Activated B cell treated with CpG ODN at 0.5 μM for 24 hours (primary cell): ENCODE measurements at regions of chr2 and their contacts with region 1.

Region 1: DNA sequence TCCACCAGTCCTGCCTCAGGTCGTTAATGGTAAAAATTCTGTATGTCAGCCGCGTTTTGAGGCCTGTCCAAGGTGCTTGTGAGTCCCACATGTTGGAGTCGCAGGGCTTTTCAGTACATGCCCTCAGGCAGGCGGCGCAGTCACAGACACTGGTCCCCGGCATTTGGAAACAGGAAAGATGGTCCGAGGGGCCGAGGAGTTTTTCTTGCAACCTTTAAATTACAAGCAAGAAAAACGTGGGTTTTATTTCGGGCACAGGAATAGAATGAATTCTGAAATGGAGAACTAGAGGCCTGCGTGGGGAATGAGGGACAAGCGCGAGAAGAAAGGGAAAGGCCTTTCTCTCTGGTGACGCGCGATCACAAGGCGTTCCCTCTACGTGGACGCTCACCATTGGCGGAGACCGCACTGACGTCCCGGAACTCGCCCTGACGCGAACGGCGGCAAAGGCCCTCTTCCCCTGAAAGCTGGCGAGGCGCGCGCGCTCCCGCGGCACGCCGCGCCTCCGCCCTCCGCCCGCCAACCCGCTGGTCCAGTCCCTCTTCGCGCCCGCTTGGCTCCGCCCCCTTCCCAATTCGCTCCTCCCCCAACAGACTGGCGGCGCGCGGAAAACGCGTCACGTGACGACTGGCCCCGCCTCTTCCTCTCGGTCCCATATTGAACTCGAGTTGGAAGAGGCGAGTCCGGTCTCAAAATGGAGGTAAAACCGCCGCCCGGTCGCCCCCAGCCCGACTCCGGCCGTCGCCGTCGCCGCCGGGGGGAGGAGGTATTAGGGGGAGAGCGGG is at the start of gene HNRNPA3:
- DNase-seq: peak; percentile 100
- ATAC-seq: peak; percentile 86
- H3K4me3 Mint-ChIP-seq: peak within 1 kb of the TSS; percentile 95
- H3K27ac Mint-ChIP-seq: peak within 1 kb of the TSS; percentile 100
- H3K4me1 Mint-ChIP-seq: peaks cover 48% of the 10 kb centered on the region
- H3K27me3 Mint-ChIP-seq: no peaks in the 10 kb centered on the region
- CTCF ChIP-seq: no peak
- total RNA-seq, gene HNRNPA3: 254 and 275 TPM in 2 replicates

Region 2: GRCh38 chr2:177148477-177149154 is 63.7 kb before region 1 on chr2:
- CTCF ChIA-PET with region 1: no interaction called
- POLR2A ChIA-PET with region 1: no interaction called
- intact Hi-C with region 1: no loop called
- DNase-seq: peak; percentile 46
- ATAC-seq: peak; percentile 84
- H3K4me3 Mint-ChIP-seq: peak overlapping the region; percentile 89
- H3K27ac Mint-ChIP-seq: peak overlapping the region; percentile 36
- H3K4me1 Mint-ChIP-seq: peaks cover 15% of the 10 kb centered on the region
- H3K27me3 Mint-ChIP-seq: peaks cover 14% of the 10 kb centered on the region
- CTCF ChIP-seq: peak; percentile 36

Region 3: GRCh38 chr2:177169810-177170514 is 42.3 kb before region 1 on chr2:
- CTCF ChIA-PET with region 1: interaction called, 25 read pairs
- POLR2A ChIA-PET with region 1: interaction called, 89 read pairs
- intact Hi-C with region 1: loop called (anchors 1 kb)
- DNase-seq: no peak
- ATAC-seq: no peak
- H3K4me3 Mint-ChIP-seq: no peak overlapping the region
- H3K27ac Mint-ChIP-seq: peak overlapping the region; percentile 46
- H3K4me1 Mint-ChIP-seq: peaks cover 13% of the 10 kb centered on the region
- H3K27me3 Mint-ChIP-seq: no peaks in the 10 kb centered on the region
- CTCF ChIP-seq: no peak

Region 4: GRCh38 chr2:177229448-177230242 is 17.3 kb after region 1 on chr2:
- CTCF ChIA-PET with region 1: no interaction called
- POLR2A ChIA-PET with region 1: interaction called, 5 read pairs
- intact Hi-C with region 1: loop called (anchors 1 kb)
- DNase-seq: no peak
- ATAC-seq: no peak
- H3K4me3 Mint-ChIP-seq: no peak overlapping the region
- H3K27ac Mint-ChIP-seq: no peak overlapping the region
- H3K4me1 Mint-ChIP-seq: peaks cover 23% of the 10 kb centered on the region
- H3K27me3 Mint-ChIP-seq: no peaks in the 10 kb centered on the region
- CTCF ChIP-seq: no peak

Region 5: GRCh38 chr2:177296040-177296439 is 83.7 kb after region 1 on chr2:
- CTCF ChIA-PET with region 1: interaction called, 3 read pairs
- POLR2A ChIA-PET with region 1: interaction called, 3 read pairs
- intact Hi-C with region 1: loop called (anchors 1 kb)
- DNase-seq: no peak
- ATAC-seq: peak; percentile 57
- H3K4me3 Mint-ChIP-seq: no peak overlapping the region
- H3K27ac Mint-ChIP-seq: peak overlapping the region; percentile 8
- H3K4me1 Mint-ChIP-seq: peaks cover 3% of the 10 kb centered on the region
- H3K27me3 Mint-ChIP-seq: no peaks in the 10 kb centered on the region
- CTCF ChIP-seq: no peak

Region 6: DNA sequence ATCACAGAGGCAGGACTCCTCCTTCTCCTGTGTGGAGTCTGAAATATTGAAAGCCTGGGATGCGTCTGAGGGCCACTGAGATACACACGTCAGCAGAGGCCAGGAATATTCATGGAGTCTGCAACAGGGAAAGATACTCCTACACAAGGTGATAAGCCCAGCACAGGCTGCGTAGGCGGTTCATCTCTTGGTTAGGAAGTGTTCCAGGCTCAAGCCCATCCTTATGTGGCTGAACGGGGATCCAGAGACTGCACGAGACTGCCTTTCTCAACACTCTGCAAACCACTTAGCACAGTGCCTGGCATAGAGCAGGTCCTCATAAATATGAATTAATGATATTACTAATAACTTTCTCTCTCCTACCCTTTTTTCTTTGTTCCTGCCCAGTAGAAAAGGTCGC is 151.0 kb after region 1 on chr2:
- CTCF ChIA-PET with region 1: no interaction called
- POLR2A ChIA-PET with region 1: no interaction called
- intact Hi-C with region 1: no loop called
- DNase-seq: no peak
- ATAC-seq: no peak
- H3K4me3 Mint-ChIP-seq: no peak overlapping the region
- H3K27ac Mint-ChIP-seq: no peak overlapping the region
- H3K4me1 Mint-ChIP-seq: no peaks in the 10 kb centered on the region
- H3K27me3 Mint-ChIP-seq: no peaks in the 10 kb centered on the region
- CTCF ChIP-seq: no peak

Region 7: GRCh38 chr2:177552422-177553175 is 340.3 kb after region 1 on chr2:
- CTCF ChIA-PET with region 1: no interaction called
- POLR2A ChIA-PET with region 1: no interaction called
- intact Hi-C with region 1: loop called (anchors 1 kb)
- DNase-seq: peak; percentile 87
- ATAC-seq: peak; percentile 90
- H3K4me3 Mint-ChIP-seq: peak overlapping the region; percentile 96
- H3K27ac Mint-ChIP-seq: peak overlapping the region; percentile 100
- H3K4me1 Mint-ChIP-seq: peaks cover 17% of the 10 kb centered on the region
- H3K27me3 Mint-ChIP-seq: no peaks in the 10 kb centered on the region
- CTCF ChIP-seq: no peak

Region 8: DNA sequence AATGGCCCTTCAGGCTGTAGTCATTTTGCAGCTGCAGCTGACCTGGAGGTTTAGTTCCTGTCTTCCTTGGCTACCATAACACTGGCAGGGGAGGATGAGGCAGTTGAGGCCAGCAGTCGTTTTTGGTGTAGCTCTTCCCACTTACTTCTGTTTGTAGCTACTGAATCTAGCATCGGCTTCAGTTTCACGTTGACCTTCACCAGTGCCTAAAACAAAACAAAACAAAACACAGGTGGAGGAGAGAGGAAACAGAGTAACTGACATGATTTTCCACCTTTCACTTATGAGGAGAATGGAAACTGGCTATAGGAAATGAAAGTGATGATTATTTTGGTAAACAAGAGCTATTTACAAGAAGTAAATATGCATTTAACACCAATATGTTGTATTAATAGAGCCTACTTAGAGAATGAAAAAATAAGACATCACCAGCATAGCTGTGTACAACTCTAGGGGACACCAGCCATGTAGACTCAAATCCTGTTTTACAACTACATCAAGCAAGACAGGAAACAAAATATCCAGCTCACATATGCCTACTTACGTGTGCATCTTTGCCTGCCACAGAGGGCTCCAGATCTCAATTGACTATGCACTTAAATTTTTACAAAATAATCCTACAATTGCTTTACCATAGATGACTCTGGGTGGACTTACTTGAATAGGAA is 417.2 kb after region 1 on chr2:
- CTCF ChIA-PET with region 1: no interaction called
- POLR2A ChIA-PET with region 1: no interaction called
- intact Hi-C with region 1: loop called (anchors 5 kb)
- DNase-seq: no peak
- ATAC-seq: no peak
- H3K4me3 Mint-ChIP-seq: no peak overlapping the region
- H3K27ac Mint-ChIP-seq: no peak overlapping the region
- H3K4me1 Mint-ChIP-seq: peaks cover 16% of the 10 kb centered on the region
- H3K27me3 Mint-ChIP-seq: no peaks in the 10 kb centered on the region
- CTCF ChIP-seq: no peak